ENCODE measurements at regions of chr1 and their contacts with region 1.

Region 1: DNA sequence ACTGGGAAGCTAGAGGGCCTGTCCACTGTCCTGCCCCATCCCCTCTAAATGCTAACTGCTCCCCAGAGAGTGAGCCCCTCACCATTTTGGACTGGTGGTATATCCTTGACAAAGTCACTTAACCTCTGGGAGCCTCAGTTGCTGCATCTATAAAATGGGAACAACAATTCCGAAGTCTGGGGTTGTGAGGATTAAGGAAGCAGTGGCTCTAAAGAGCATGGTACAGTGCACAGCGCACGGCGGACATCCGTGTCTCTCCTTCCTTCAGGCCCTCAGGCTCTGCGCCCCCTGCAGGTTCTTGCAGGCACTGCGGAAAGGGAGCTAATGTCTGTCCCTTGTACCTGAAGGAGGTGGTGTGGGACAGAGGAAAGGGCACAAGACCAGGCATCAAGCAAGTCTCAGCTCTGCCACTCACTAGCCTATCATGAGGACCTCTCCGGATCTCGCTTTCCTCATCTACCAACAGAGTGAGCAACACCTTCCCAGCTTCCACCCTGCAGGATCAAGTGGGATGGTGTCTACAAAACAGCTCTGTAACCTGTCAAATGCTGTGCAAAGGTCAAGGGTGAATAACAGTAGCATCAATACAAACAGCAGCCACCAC is 20.1 kb downstream of the ECE1 start:
- DNase-seq: peak; percentile 84
- H3K4me3 Mint-ChIP-seq: no peak overlapping the region
- H3K27ac Mint-ChIP-seq: no peak overlapping the region
- H3K4me1 Mint-ChIP-seq: peaks cover 15% of the 10 kb centered on the region
- H3K27me3 Mint-ChIP-seq: no peaks in the 10 kb centered on the region

Region 2: GRCh38 chr1:20661207-20662109 is 608.7 kb before region 1 on chr1 and contains the start of gene DDOST:
- CTCF ChIA-PET with region 1: no interaction called
- POLR2A ChIA-PET with region 1: no interaction called
- DNase-seq: peak; percentile 96
- H3K4me3 Mint-ChIP-seq: peak within 1 kb of the TSS; percentile 99
- H3K27ac Mint-ChIP-seq: peak within 1 kb of the TSS; percentile 97
- H3K4me1 Mint-ChIP-seq: peaks cover 52% of the 10 kb centered on the region
- H3K27me3 Mint-ChIP-seq: no peaks in the 10 kb centered on the region
- total RNA-seq, gene DDOST: 171 to 182 TPM

Region 3: DNA sequence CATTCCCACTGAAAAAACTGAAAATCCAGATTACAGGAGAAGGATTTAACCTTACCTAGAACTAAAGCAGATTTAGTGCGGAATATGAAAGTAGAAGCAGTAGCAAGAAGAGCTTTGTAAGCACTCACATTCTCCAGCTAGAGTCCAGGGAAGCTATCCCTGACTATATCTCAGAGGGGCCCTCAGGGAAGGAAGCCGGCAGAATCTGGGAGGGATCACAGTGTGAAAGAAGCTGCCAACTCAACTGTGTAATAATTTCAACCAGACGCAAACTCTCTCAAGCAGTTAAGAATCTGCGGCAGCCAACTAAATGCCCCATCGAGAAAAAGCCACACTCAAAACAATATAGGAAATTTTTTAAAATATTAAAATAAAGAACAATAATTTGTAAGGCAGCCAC is 257.3 kb before region 1 on chr1:
- CTCF ChIA-PET with region 1: no interaction called
- POLR2A ChIA-PET with region 1: no interaction called
- DNase-seq: no peak
- H3K4me3 Mint-ChIP-seq: no peak overlapping the region
- H3K27ac Mint-ChIP-seq: no peak overlapping the region
- H3K4me1 Mint-ChIP-seq: peaks cover 19% of the 10 kb centered on the region
- H3K27me3 Mint-ChIP-seq: no peaks in the 10 kb centered on the region

Region 4: DNA sequence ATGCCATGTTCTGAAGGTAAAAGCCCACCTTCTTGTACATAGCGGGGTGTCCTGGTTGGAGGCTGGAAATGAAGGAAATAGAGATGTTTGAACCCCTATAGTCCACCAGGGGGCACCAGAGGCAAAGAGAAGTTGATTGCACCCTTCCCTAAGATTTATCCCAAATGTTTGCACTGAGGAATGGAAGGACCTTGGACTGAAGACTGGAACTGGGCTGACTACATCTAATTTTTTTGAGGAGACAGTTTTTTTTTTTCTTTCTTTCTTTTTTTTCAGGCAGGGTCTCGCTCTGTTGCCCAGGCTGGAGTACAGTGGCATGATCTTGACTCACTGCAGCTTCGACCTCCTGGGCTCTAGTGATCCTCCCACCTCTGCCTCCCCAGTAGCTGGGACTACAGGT is 38.1 kb before region 1 on chr1:
- CTCF ChIA-PET with region 1: interaction called, 14 read pairs
- POLR2A ChIA-PET with region 1: no interaction called
- DNase-seq: peak; percentile 34
- H3K4me3 Mint-ChIP-seq: no peak overlapping the region
- H3K27ac Mint-ChIP-seq: no peak overlapping the region
- H3K4me1 Mint-ChIP-seq: no peaks in the 10 kb centered on the region
- H3K27me3 Mint-ChIP-seq: no peaks in the 10 kb centered on the region

Region 5: DNA sequence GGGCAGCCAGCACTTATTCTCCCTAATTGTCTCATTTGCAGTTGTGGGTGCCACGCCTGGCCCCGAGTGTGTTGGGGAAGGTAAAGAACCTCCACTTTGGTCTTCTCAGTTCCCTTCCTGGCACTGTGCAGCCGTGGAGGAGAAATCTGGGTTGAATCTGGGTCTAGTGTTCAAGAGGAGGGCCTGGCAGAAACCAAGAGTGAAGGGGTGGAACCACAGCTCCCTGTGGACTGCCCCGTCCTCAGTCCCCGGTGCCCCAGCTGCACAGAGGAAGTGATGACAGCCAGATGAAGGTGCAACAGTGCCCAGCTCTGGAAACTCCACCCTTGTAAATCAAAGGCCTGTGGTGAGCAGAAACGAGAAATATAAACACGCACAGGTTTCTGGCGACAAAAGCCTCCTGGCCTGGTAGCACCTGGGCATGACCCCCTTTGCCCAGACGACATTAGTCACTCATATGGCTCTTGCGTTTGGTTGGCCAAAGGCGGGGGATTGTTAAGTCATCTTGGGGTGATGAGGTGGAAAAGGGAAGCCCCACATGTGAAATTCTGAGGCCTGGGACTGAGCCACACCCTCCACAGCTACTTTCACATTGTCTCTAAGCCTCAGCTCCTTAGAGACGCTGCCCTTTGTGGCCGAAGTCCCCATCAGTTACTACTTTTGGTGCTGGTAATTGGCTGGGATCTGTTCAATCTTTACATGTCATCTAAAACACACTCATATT is 24.2 kb after region 1 on chr1:
- CTCF ChIA-PET with region 1: interaction called, 114 read pairs
- POLR2A ChIA-PET with region 1: interaction called, 37 read pairs
- DNase-seq: peak; percentile 89
- H3K4me3 Mint-ChIP-seq: peak overlapping the region; percentile 79
- H3K27ac Mint-ChIP-seq: peak overlapping the region; percentile 98
- H3K4me1 Mint-ChIP-seq: peaks cover 85% of the 10 kb centered on the region
- H3K27me3 Mint-ChIP-seq: no peaks in the 10 kb centered on the region

Region 6: DNA sequence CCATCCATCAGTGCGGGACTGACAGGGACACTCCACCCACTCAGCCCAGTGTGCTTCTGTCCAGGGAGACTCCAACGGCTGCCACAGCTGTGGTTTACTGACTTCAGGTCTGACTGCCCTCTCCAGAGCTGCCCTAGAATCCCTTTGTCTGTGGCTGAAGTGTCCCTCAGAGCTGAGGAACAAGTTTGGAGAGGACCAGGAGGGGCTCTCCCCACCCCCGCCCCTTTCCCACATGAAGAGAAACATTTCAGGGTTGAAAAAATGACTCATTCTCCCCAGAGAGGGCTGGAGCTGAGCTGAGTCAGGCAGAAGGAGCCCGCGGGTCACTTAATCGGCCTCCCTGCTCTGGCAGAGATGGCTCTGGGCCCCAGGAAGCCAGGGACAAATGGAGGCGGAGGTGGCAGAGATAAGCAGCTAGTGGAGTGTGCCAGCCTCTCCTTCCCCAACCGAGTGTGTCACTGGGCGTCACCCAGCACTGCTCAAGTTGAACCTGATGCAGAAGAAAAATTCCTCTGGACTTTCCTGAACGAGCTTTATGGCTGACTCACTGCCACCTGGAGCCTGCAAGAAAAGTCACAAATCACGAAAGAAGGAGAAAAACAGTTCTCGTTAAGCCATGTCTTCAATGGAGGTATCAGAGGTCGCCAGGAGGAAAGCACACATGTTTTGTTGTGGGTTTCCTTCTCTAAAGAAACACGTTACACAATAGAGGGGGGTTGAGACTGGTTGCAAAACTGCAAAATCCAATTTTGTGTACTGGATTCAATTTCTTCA is 54.4 kb after region 1 on chr1:
- CTCF ChIA-PET with region 1: interaction called, 23 read pairs
- POLR2A ChIA-PET with region 1: interaction called, 8 read pairs
- DNase-seq: peak; percentile 63
- H3K4me3 Mint-ChIP-seq: peak overlapping the region; percentile 40
- H3K27ac Mint-ChIP-seq: peak overlapping the region; percentile 72
- H3K4me1 Mint-ChIP-seq: peaks cover 67% of the 10 kb centered on the region
- H3K27me3 Mint-ChIP-seq: no peaks in the 10 kb centered on the region

Region 7: DNA sequence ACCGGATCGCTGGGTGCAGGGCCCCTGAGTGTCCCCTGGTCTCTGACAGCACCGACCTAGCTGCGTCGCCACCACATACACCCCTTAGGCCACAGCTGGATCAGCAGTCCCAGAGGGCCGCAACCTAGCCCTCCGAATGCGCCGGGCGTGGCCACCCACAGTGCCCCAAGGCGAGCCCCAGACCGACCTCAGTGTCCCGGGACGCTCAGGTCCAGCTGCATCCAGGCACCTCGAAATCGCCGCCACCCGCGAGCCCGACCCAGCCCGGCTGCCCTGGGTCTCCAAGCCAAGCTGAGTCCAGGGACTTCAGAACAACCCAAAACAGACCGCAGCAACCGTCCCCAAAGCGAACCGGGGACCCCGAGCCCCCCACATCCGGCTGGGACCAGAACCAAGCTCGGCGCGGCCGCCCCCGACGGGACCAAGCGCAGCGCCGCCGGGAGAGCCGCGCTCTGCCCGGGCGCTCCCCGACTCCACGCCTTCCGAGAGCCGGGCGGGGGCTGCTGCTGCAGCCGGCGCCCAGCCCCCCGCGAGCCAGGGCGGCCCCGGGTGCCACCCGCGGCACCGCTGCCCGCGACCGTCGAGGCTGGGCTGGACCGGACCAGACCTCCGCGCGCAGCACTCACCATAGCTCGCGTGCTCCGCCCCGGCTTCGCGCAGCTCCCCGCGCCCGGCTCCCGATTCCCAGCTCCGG is 74.7 kb after region 1 on chr1:
- CTCF ChIA-PET with region 1: interaction called, 23 read pairs
- POLR2A ChIA-PET with region 1: interaction called, 12 read pairs
- DNase-seq: peak; percentile 36
- H3K4me3 Mint-ChIP-seq: peak overlapping the region; percentile 83
- H3K27ac Mint-ChIP-seq: peak overlapping the region; percentile 88
- H3K4me1 Mint-ChIP-seq: peaks cover 41% of the 10 kb centered on the region
- H3K27me3 Mint-ChIP-seq: no peaks in the 10 kb centered on the region